Endothelial cell of umbilical vein (primary cell): ENCODE measurements at regions of chr3 and their contacts with region 1.

Region 1: GRCh38 chr3:28241221-28242160 is at the start of gene CMC1:
- DNase-seq: peak; percentile 98
- H3K4me3 ChIP-seq: peak within 1 kb of the TSS; percentile 55 to 94 (median 91)
- H3K27ac ChIP-seq: peak within 1 kb of the TSS; percentile 48
- H3K4me1 ChIP-seq: peaks cover 12% of the 10 kb centered on the region
- H3K27me3 ChIP-seq: peaks cover 0 to 5% of the 10 kb centered on the region in 2 experiments
- CTCF ChIP-seq: no peak
- POLR2A ChIP-seq: peak; percentile 91
- total RNA-seq, gene CMC1: 15.3 and 18.6 TPM in 2 replicates

Region 2: GRCh38 chr3:27721717-27722542 is 519.6 kb before region 1 on chr3 and contains the start of gene EOMES:
- CTCF ChIA-PET with region 1: no interaction called
- POLR2A ChIA-PET with region 1: no interaction called
- dilution Hi-C with region 1: no loop called
- intact Hi-C with region 1: loop called (anchors 5 kb)
- DNase-seq: peak; percentile 29
- H3K4me3 ChIP-seq: peak within 1 kb of the TSS in 2 of 3 experiments; percentile 18 to 20
- H3K27ac ChIP-seq: no peak within 1 kb of the TSS
- H3K4me1 ChIP-seq: peaks cover 9% of the 10 kb centered on the region
- H3K27me3 ChIP-seq: peaks cover 79 to 99% of the 10 kb centered on the region in 2 experiments
- CTCF ChIP-seq: peak; percentile 3 to 36
- POLR2A ChIP-seq: no peak
- total RNA-seq, gene EOMES: not detected in 2 replicates

Region 3: DNA sequence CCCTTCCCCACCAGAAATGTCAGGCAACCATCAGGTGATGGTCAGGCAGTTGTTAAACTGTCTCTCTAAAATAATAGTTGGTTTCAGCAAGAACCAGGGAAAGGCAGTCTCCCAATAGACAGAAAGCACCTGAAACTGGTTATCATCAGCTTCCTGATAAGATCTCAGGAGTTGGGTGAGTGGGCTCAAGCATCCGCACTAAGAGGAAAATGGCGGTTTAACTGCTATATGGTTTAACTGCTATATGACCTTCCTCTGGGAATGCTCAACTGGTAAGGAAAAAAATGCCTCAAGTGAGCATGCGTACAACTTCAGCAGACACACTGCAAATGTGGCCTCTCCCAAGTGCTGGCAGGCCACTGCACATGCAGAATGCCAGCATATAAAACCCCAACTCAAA is 240.9 kb before region 1 on chr3:
- CTCF ChIA-PET with region 1: no interaction called
- POLR2A ChIA-PET with region 1: no interaction called
- dilution Hi-C with region 1: no loop called
- intact Hi-C with region 1: no loop called
- DNase-seq: no peak
- H3K4me3 ChIP-seq: no peak overlapping the region
- H3K27ac ChIP-seq: no peak overlapping the region
- H3K4me1 ChIP-seq: no peaks in the 10 kb centered on the region
- H3K27me3 ChIP-seq: no peaks in the 10 kb centered on the region
- CTCF ChIP-seq: no peak
- POLR2A ChIP-seq: no peak

Region 4: DNA sequence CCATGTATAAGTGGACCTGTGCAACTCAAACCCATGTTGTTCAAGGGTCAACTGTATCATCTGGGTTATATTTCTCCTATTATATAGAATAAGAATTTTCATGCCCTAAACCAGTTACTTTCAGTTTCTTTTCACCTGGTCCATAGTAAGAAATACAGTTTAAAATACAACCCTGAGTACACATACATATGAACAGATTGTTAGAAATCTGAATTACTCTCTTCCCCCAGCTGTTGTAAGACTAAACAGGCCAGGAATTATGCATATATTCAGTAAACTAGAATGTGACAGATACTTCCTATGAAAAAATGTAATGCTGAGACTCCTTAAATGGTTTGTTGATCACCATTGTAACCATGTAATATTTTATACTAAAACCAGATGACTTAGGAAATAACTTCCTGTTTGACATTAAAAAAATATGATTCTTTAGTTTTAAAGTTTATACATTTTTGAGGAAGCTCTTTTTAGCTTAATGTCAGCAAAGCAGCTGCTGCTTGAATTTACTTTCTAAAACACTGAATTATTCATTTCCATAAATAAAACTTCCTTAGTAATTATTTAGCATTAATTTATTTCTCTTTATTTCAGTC is 54.5 kb after region 1 on chr3:
- CTCF ChIA-PET with region 1: no interaction called
- POLR2A ChIA-PET with region 1: no interaction called
- dilution Hi-C with region 1: no loop called
- intact Hi-C with region 1: loop called (anchors 5 kb)
- DNase-seq: peak; percentile 32
- H3K4me3 ChIP-seq: no peak overlapping the region
- H3K27ac ChIP-seq: no peak overlapping the region
- H3K4me1 ChIP-seq: peaks cover 5% of the 10 kb centered on the region
- H3K27me3 ChIP-seq: no peaks in the 10 kb centered on the region
- CTCF ChIP-seq: no peak
- POLR2A ChIP-seq: no peak

Region 5: GRCh38 chr3:28348629-28349483 is 107.4 kb after region 1 on chr3 and contains the starts of genes AZI2 and ZCWPW2:
- CTCF ChIA-PET with region 1: no interaction called
- POLR2A ChIA-PET with region 1: no interaction called
- dilution Hi-C with region 1: no loop called
- intact Hi-C with region 1: loop called (anchors 1 kb)
- DNase-seq: peak; percentile 95
- H3K4me3 ChIP-seq: peak within 1 kb of the TSS; percentile 59 to 86 (median 69)
- H3K27ac ChIP-seq: peak within 1 kb of the TSS; percentile 98
- H3K4me1 ChIP-seq: peaks cover 16% of the 10 kb centered on the region
- H3K27me3 ChIP-seq: no peaks in the 10 kb centered on the region
- CTCF ChIP-seq: peak in 1 of 2 donors; percentile 21
- POLR2A ChIP-seq: no peak
- total RNA-seq, gene AZI2: 39.5 and 50.0 TPM in 2 replicates
- total RNA-seq, gene ZCWPW2: 0.40 TPM in 1 of 2 replicates, not detected in the other